Activated CD8-positive, alpha-beta T cell treated with anti-CD3 and anti-CD28 coated beads, Interleukin-2, amount 10 ng/mL, durations not matched to agents 7 days and 5 days (primary cell): ENCODE measurements at regions of chr1 and their contacts with region 1.

Region 1: DNA sequence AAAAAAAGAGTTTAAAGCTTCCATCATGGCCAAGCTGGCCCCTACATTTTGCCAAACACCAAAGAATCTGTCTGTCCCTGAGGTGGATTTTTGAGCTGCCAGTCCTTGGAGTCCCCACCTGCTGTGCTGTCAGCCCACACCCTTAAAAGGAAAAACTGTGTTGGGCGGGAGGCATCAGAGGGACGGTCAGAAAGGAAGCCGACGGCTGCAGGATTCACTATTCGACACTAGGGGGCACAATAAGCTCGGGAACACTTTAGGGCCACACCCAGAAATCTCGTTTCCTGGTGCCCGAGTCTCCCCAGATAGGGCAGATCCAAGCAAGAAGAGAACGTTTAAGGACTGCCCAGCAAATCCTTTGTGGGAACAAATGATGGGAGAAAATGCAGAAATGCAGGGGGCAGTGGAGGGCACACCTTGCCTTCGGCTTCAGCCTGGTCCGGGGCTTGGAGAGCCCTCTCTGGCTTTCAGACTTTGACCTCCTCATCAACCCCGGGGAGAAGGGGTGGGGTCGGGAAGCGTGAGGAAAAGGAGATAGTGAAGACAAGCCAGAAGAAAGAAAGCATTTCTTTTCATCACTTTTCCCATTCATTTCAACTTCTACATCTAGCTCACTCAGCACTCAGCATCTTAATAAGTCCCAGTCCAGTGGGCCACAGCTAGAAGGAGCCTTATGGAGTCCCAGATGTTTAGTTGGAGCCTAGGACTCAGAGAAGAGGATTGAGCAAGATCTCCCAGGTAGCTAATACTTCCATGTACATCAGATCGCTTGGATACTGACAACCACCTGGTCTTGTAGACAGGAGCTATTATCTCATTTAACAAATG is 5.0 kb upstream of the CTTNBP2NL start:
- DNase-seq: peak; percentile 88
- ATAC-seq: peak; percentile 90
- H3K4me3 Mint-ChIP-seq: peak overlapping the region; percentile 61
- H3K27ac Mint-ChIP-seq: no peak overlapping the region
- H3K4me1 Mint-ChIP-seq: peaks cover 22% of the 10 kb centered on the region
- H3K27me3 Mint-ChIP-seq: peaks cover 30% of the 10 kb centered on the region

Region 2: GRCh38 chr1:112369392-112370285 is 21.4 kb before region 1 on chr1:
- CTCF ChIA-PET with region 1: interaction called, 18 read pairs
- POLR2A ChIA-PET with region 1: no interaction called
- DNase-seq: peak; percentile 86
- ATAC-seq: peak; percentile 100
- H3K4me3 Mint-ChIP-seq: no peak overlapping the region
- H3K27ac Mint-ChIP-seq: no peak overlapping the region
- H3K4me1 Mint-ChIP-seq: peaks cover 4% of the 10 kb centered on the region
- H3K27me3 Mint-ChIP-seq: peaks cover 34% of the 10 kb centered on the region

Region 3: DNA sequence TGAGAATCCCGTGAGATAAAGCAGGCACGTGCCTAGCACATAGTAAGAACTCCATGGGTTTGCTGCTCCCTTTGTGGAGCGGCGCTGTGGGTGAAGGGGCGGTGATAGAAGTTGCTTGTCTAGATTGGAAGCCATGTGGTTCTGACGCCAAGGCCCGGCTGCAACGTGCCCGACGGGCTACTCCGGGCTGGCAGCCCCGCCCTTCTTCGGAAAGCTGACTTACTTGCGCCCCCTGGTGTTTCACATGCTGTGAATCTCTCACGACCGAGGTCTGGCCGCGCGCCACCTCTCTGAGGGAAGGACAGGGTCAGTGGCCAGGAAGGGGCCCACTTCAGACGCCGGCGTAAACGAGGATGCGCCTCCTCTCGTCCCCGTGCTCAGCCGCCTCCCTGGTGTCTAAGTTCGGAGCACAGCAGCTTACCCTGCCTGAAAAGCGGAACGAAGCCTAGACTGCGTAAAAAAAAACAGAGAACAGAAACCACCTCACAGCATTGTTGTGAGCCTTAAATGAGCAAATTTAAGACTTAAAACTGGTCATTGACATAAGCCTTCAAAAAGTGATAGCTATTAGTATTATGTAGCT is 75.2 kb after region 1 on chr1:
- CTCF ChIA-PET with region 1: interaction called, 126 read pairs
- POLR2A ChIA-PET with region 1: interaction called, 4 read pairs
- DNase-seq: peak; percentile 89
- ATAC-seq: peak; percentile 98
- H3K4me3 Mint-ChIP-seq: peak overlapping the region; percentile 78
- H3K27ac Mint-ChIP-seq: peak overlapping the region; percentile 64
- H3K4me1 Mint-ChIP-seq: peaks cover 13% of the 10 kb centered on the region
- H3K27me3 Mint-ChIP-seq: peaks cover 34% of the 10 kb centered on the region

Region 4: DNA sequence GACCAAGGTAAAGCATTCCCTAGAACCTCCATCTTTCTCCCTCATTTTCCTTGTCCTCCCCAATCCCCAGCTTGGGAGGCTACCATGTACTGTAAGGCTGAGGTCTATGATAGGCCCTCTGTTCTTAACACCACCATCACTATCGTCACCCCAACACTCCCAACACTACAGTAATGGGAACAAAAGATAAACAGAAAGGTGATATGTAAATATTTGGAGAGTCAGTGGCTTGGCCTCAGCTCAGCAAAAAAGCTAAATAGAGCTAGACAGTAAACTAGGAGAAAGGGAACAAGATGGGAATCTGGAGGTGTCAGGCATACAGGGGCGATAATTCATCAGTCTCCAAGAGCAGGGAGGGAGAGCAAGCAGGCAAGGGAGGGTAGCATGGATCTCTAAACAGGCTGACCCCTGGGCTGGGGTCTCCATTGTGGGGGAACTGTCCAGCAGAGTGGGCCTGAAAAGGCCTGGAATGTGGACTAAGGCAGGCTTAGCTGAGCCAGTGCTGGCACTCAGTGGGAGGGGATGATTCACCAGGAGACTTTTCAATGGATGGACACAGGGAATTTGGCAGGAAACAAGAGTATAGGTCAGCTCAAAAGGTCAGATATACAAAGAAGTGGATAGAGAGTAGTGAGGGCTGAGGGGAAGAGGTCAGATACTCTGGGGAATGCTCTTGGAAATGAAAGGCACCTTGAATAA is 124.5 kb after region 1 on chr1:
- CTCF ChIA-PET with region 1: no interaction called
- POLR2A ChIA-PET with region 1: no interaction called
- DNase-seq: no peak
- ATAC-seq: no peak
- H3K4me3 Mint-ChIP-seq: no peak overlapping the region
- H3K27ac Mint-ChIP-seq: no peak overlapping the region
- H3K4me1 Mint-ChIP-seq: peaks cover 1% of the 10 kb centered on the region
- H3K27me3 Mint-ChIP-seq: peaks cover 9% of the 10 kb centered on the region

Region 5: DNA sequence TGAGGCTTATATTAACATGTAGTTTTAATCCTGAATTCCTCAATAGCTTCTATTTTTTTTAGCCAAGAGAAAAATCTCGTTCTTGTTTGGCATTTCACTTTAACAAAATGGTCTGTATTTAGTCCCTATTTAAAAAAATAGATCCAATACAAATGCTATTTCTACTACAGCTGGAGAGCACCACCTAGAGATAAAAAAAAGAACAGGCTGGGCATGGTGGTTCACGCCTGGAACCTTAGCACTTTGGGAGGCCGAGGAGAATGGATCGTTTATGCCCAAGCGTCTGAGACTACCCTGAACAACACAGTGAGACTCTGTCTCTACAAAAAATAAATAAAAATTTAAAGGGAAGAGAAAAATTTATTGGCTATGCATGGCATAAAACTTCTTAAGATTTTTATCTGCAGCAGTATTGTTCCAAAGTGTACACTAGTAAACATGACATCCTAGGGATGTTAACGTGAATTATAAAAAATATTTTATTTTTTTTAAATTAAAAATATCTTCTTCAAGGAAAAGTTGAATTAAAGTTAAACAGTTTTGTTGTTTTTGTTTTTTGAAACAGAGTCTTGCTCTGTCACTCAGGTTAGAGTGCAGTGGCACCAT is 223.6 kb after region 1 on chr1:
- CTCF ChIA-PET with region 1: interaction called, 71 read pairs
- POLR2A ChIA-PET with region 1: no interaction called
- DNase-seq: peak; percentile 31
- ATAC-seq: no peak
- H3K4me3 Mint-ChIP-seq: no peak overlapping the region
- H3K27ac Mint-ChIP-seq: no peak overlapping the region
- H3K4me1 Mint-ChIP-seq: peaks cover 23% of the 10 kb centered on the region
- H3K27me3 Mint-ChIP-seq: no peaks in the 10 kb centered on the region

Region 6: GRCh38 chr1:112706908-112707663 is 316.1 kb after region 1 on chr1 and contains the start of gene RHOC:
- CTCF ChIA-PET with region 1: interaction called, 49 read pairs
- POLR2A ChIA-PET with region 1: no interaction called
- DNase-seq: peak; percentile 72
- ATAC-seq: peak; percentile 75
- H3K4me3 Mint-ChIP-seq: peak within 1 kb of the TSS; percentile 79
- H3K27ac Mint-ChIP-seq: peak within 1 kb of the TSS; percentile 92
- H3K4me1 Mint-ChIP-seq: peaks cover 44% of the 10 kb centered on the region
- H3K27me3 Mint-ChIP-seq: peaks cover 25% of the 10 kb centered on the region
- total RNA-seq, gene RHOC: 85.6 to 93.8 TPM